ENCODE measurements at regions of chr1 and their contacts with region 1.

Region 1: DNA sequence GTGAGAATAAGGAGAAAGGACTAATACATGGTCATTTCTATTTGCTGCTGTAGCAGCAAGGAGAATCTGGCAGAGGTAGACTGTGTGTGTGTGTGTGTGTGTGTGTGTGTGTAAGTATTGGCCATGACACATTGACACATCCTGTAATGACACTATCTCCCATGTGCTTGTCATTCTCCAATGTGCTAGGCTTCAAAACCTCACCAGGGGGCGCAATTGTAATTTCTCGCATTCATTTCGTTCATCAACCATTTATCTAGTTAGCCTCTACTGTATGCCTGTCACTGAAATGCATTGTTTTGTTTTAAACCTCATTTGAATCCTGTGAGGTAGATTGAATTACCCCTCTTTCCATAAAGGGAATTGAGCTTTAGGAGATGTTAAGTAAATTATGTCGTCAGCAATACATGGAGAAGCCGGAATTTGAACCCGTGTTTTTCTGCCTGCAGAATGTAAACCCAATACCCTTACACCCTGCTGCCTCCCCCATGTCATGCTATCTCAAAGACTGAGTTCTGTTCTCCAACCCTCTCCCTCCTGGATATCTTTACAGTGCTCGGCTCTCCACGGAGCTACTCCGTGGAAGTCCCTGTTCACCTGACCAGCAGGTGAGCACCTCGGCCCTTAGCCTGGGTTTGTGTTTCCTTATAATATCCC is 100.8 kb downstream of the UCK2 start:
- DNase-seq: peak; percentile 77
- ATAC-seq: peak; percentile 68
- H3K4me3 ChIP-seq: no peak overlapping the region
- H3K27ac ChIP-seq: no peak overlapping the region
- H3K4me1 ChIP-seq: no peaks in the 10 kb centered on the region
- H3K27me3 ChIP-seq: no peaks in the 10 kb centered on the region
- CTCF ChIP-seq: peak; percentile 93

Region 2: DNA sequence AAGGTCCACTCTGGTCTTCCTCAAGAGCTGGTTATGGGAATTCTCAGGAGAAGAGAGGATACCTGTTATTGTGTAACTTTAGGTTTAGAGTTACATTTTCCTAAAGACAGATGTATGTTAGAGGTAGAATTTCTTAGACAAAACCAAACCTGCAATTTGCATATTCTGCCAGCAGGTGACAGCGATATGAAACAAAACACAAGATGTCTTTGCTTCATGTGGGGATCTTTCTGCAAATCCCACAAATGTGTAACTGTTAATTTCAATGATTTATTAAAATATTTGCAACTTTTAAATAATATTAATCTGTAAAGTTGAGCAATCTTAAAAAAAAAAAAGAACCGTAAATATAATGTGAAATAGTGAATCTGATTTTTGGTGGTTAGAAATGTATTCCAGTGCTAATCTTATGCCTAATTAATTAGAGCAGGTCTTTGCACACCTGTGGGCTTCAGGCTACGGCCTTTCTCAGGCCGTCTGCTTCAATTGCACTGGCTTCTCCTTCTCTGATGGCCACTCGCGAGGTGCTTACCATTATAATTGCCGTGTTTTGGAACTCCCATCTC is 205.2 kb after region 1 on chr1:
- CTCF ChIA-PET with region 1: no interaction called
- POLR2A ChIA-PET with region 1: no interaction called
- intact Hi-C with region 1: loop called (anchors 10 kb)
- DNase-seq: peak; percentile 62
- ATAC-seq: no peak
- H3K4me3 ChIP-seq: no peak overlapping the region
- H3K27ac ChIP-seq: no peak overlapping the region
- H3K4me1 ChIP-seq: no peaks in the 10 kb centered on the region
- H3K27me3 ChIP-seq: peaks cover 7% of the 10 kb centered on the region; the same call in 1 of the 2 replicates
- CTCF ChIP-seq: peak; percentile 83

Region 3: DNA sequence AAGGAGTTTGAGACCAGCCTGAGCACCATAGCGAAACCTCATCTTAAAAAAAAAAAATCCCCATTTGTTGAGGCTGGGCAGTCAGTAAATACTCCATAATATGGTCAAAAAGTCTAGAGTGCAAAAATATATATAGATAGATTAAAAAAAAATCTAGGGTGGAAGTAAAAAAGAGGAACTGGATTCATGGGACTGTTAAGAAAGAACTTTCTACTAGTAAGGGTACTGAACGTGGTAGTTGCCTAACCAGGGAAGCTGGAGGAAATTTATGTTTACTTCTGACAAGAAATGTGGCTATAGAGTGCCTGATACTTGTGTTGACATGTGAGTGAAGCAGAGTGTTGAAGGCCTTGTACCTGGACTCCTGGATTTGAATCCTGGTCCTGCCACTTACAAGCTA is 504.5 kb after region 1 on chr1:
- CTCF ChIA-PET with region 1: no interaction called
- POLR2A ChIA-PET with region 1: no interaction called
- intact Hi-C with region 1: loop called (anchors 5 kb)
- DNase-seq: no peak
- ATAC-seq: no peak
- H3K4me3 ChIP-seq: no peak overlapping the region
- H3K27ac ChIP-seq: no peak overlapping the region
- H3K4me1 ChIP-seq: no peaks in the 10 kb centered on the region
- H3K27me3 ChIP-seq: peaks cover 6% of the 10 kb centered on the region; the same call in 1 of the 2 replicates
- CTCF ChIP-seq: no peak

Region 4: DNA sequence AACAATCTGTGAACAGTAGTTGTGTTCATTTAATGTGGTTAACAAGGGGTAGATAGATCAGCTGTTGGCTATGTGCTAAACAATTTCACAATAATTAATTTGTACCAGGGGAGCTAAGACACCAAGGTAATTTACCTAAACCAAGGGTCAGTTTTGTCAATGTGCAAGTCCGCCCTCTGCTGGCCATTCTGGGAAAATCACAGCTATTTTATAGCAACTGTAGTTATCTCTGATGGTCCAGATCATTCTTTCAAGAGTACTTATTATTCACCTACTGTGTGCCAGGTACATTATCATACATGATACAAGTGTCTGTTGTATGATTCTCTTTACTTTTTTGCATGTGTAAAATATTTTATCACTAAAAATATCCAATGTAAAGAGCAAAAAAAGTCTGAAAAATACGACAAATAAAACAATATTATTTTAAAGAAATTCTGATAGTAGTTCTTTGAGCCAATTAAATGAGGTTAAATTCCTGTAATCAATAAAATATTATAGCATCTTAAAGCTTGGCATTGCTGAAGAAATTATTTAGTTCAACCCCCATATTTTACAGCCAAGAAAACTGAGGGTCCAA is 550.9 kb after region 1 on chr1:
- CTCF ChIA-PET with region 1: interaction called, 13 read pairs
- POLR2A ChIA-PET with region 1: no interaction called
- intact Hi-C with region 1: loop called (anchors 1 kb)
- DNase-seq: peak; percentile 79
- ATAC-seq: peak; percentile 40; the same call in 1 of the 2 replicates
- H3K4me3 ChIP-seq: no peak overlapping the region
- H3K27ac ChIP-seq: no peak overlapping the region
- H3K4me1 ChIP-seq: 0 out of 2 replicates have a peak, but pooled peaks cover under 1% of the 10 kb centered on the region
- H3K27me3 ChIP-seq: peaks cover 28% of the 10 kb centered on the region; the same call in 1 of the 2 replicates
- CTCF ChIP-seq: peak; percentile 92

Region 5: DNA sequence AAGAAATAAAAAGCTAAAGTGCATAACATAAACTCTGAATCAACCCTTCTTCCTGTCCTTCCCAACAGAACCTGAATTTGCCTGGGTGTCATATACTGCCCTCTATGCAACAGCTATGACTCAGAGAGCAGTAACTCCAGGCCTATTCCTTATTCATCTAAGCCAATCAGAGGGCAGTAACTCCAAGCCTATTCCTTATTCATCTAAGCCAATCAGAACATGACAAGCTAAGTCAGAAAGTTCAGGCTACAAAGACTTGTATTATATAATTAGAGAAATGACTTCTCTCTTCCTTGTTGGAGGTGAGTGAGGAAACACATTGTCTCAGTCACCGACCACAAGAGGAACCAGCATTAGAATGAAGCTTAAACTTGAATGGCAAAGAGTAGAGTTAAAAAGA is 974.1 kb after region 1 on chr1:
- CTCF ChIA-PET with region 1: no interaction called
- POLR2A ChIA-PET with region 1: no interaction called
- intact Hi-C with region 1: loop called (anchors 10 kb)
- DNase-seq: peak; percentile 74
- ATAC-seq: peak; percentile 69
- H3K4me3 ChIP-seq: no peak overlapping the region
- H3K27ac ChIP-seq: no peak overlapping the region
- H3K4me1 ChIP-seq: peaks cover 17% of the 10 kb centered on the region
- H3K27me3 ChIP-seq: no peaks in the 10 kb centered on the region
- CTCF ChIP-seq: 0 out of 2 replicates have a peak, but pooled peaks have one; percentile 14

Region 6: DNA sequence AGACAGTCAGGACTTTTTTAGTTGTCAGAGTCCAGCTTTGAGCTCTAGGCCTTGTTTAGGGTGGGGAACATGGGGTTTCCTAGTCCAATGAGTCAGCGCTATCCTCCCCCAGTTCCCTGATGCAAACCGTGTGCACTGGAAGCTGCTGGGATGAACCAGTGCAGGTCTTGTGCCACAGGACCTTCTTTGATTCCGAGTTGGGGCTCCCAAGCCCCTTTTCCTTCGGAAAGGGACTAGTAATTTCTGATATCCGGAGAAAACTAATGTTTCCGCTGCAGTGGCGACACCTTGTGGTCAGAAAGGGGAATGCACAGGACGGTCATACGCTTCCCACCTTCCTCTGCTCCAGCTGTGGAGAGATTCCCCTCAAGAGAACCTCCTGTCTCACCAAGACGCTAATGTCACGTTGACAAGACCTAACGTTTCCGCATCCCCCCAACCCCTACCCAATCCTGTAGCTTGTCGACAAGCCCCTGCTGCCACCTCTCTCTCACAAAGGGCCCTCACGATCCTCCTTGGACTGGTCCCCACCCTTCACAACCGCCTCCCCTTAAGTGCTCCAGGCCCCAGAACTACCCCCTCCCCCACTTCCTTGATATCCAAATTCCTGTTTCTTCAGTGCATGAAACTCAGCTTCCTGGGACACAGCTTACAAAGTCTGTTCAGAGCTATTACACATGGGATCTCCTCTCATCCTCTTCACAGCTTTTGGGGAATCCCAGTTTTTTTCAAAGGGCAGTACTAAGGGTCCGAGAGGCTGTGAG is 1131.0 kb after region 1 on chr1:
- CTCF ChIA-PET with region 1: interaction called, 4 read pairs
- POLR2A ChIA-PET with region 1: no interaction called
- intact Hi-C with region 1: loop called (anchors 10 kb)
- DNase-seq: peak; percentile 90
- ATAC-seq: peak; percentile 52
- H3K4me3 ChIP-seq: peak overlapping the region; percentile 28; the same call in 1 of the 2 replicates
- H3K27ac ChIP-seq: no peak overlapping the region
- H3K4me1 ChIP-seq: peaks cover 14% of the 10 kb centered on the region
- H3K27me3 ChIP-seq: no peaks in the 10 kb centered on the region
- CTCF ChIP-seq: peak; percentile 97